ENCODE measurements at regions of chr5 and their contacts with region 1.

Region 1: DNA sequence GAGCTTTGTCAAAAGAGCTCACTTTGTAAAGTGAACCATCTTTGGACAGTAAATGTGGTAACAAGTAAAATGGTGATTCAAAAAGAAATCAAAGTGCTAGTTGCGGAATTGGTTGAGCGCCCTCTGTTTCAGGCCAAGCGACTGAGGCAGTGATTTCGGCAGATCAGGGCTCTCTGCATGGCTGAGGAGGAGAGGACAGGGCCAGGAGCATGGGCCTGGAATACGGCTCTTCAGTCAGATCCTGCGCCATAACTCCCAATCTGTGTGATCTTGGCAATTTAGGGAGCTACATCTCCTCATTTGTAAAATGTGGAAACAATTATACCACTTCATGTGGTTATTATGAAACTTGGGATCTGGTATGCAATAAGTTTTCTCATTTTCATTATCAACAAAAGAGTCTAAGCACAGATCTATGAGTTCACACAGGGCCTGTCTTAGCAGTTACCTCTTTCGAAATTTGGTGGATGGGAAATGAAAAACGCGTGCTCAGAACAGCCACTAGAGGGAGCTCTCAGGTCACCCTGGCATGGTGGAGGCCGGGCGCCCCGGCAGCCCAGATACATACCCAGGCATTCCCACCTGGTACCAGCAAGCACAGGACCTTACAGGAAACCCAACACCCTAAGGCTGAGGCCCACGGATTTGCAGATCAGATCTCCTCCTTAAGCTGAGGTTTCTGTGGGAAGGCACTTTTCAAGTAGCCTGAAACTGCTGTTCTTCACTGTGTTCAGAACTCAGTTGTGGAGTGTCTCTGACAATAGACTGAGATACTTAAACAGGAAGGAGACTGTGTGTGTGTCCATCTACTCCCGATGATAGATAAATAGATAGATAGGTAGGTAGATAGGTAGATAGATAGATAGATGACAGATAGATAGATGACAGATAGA is 303.7 kb downstream of the RAB3C start:
- DNase-seq: peak; percentile 71 to 81
- H3K4me3 ChIP-seq: no peak overlapping the region
- H3K4me3 Mint-ChIP-seq: no peak overlapping the region
- H3K27ac Mint-ChIP-seq: no peak overlapping the region
- H3K4me1 ChIP-seq: peaks cover 10% of the 10 kb centered on the region
- H3K4me1 Mint-ChIP-seq: peaks cover 17% of the 10 kb centered on the region
- H3K27me3 ChIP-seq: no peaks in the 10 kb centered on the region; the same call in 1 of the 2 replicates
- H3K27me3 Mint-ChIP-seq: peaks cover 3% of the 10 kb centered on the region
- CTCF ChIP-seq: peak; percentile 89 to 93

Region 2: DNA sequence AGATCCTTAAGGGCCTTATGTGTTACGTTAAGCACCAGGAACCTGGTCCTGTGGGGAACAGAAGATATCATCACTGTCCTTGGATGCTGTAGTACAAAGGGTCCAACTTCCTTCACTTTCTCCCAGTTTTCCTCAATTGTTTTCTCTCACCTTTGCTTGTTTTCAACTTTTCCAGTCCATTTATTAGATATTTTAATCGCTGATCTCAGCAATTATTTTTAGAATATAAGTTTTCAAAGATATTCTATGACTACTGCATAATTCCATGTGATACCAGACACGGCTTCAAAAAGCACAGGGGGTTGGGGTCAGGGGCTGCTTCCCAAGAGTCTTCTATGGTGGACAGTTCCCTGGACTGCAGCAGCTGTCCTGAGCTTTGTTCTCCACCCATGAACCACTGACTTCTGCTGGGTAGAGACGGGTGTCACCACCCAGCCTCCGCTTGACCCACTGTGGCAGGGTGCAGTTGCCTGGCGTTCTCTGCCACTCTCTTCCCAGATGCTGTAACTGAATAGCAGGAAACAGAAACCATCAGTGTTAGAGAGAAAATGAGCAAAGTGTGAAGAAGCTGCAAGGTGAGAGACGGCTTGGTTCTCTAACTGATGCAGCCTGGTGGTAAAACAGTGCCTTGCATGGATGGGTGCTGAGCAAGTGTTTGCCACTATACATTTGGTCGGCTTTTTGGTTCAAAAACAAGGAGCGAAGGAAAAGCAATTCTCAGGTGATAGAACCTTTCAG is 79.3 kb after region 1 on chr5:
- CTCF ChIA-PET with region 1: interaction called, 5 read pairs
- POLR2A ChIA-PET with region 1: no interaction called
- intact Hi-C with region 1: loop called (anchors 2 kb)
- DNase-seq: no peak
- H3K4me3 ChIP-seq: no peak overlapping the region
- H3K4me3 Mint-ChIP-seq: no peak overlapping the region
- H3K27ac Mint-ChIP-seq: no peak overlapping the region
- H3K4me1 ChIP-seq: no peaks in the 10 kb centered on the region
- H3K4me1 Mint-ChIP-seq: peaks cover 10% of the 10 kb centered on the region
- H3K27me3 ChIP-seq: no peaks in the 10 kb centered on the region
- H3K27me3 Mint-ChIP-seq: no peaks in the 10 kb centered on the region
- CTCF ChIP-seq: peak; percentile 13 to 17

Region 3: DNA sequence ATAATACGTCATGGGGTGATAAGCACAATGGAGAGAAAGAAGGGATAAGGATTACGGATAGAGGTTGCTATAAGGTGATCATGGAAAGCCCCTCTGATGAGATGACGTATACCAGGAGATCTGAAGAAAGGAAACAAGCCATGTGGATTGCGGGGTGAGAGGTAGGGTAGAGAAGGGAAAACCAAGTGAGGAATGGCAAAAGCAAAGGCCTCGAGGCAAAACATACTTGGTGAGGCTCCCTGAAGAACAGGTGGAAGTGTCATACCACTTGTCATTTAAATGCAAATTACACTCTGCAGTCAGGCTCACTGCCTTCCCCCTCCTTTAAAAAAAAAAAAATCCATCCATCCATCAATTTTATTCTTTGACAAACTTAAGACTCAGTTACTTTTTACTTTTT is 117.1 kb after region 1 on chr5:
- CTCF ChIA-PET with region 1: no interaction called
- POLR2A ChIA-PET with region 1: no interaction called
- intact Hi-C with region 1: loop called (anchors 1 kb)
- DNase-seq: no peak
- H3K4me3 ChIP-seq: no peak overlapping the region
- H3K4me3 Mint-ChIP-seq: no peak overlapping the region
- H3K27ac Mint-ChIP-seq: no peak overlapping the region
- H3K4me1 ChIP-seq: 0 out of 2 replicates have a peak, but pooled peaks cover 14% of the 10 kb centered on the region
- H3K4me1 Mint-ChIP-seq: peaks cover 26% of the 10 kb centered on the region
- H3K27me3 ChIP-seq: no peaks in the 10 kb centered on the region
- H3K27me3 Mint-ChIP-seq: no peaks in the 10 kb centered on the region
- CTCF ChIP-seq: no peak

Region 4: DNA sequence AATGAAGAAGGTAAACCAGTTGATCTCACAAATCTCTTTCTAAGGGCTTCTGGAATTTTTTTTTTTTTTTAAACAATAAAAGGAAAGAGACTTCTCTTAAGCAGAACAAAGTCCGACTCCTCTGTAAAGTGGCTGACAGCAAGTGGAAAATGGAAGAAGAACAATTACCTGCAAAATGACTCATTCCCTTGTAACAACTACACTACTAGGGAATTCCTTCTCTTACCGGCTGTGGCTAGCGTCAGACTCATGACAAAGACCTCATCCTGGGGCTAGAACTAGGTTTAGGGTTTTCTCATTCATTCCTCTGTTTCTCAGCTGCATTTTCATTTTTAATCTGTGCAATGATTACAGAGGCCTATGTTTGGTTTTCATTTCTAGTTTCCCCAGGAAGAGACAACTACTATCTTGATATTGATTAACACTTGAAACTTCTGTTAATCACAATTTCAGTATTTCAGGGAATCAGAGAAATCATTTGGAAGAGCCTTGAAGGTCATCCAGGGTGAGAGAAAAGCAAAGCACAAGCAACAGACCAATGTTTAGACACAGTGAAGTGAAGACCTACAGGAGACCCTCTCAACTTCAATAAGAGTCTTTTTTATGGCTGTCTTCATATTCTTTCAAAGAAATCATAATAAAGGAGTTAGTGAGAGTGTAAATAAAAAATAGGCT is 134.2 kb after region 1 on chr5:
- CTCF ChIA-PET with region 1: no interaction called
- POLR2A ChIA-PET with region 1: no interaction called
- intact Hi-C with region 1: loop called (anchors 5 kb)
- DNase-seq: peak in 1 of 2 experiments; percentile 37
- H3K4me3 ChIP-seq: no peak overlapping the region
- H3K4me3 Mint-ChIP-seq: peak overlapping the region; percentile 54
- H3K27ac Mint-ChIP-seq: peak overlapping the region; percentile 49
- H3K4me1 ChIP-seq: peaks cover 32% of the 10 kb centered on the region
- H3K4me1 Mint-ChIP-seq: peaks cover 46% of the 10 kb centered on the region
- H3K27me3 ChIP-seq: no peaks in the 10 kb centered on the region
- H3K27me3 Mint-ChIP-seq: no peaks in the 10 kb centered on the region
- CTCF ChIP-seq: no peak

Region 5: GRCh38 chr5:59367791-59368394 is 481.3 kb after region 1 on chr5:
- CTCF ChIA-PET with region 1: interaction called, 3 read pairs
- POLR2A ChIA-PET with region 1: interaction called, 6 read pairs
- intact Hi-C with region 1: loop called (anchors 5 kb)
- DNase-seq: peak; percentile 63
- H3K4me3 ChIP-seq: no peak overlapping the region
- H3K4me3 Mint-ChIP-seq: no peak overlapping the region
- H3K27ac Mint-ChIP-seq: no peak overlapping the region
- H3K4me1 ChIP-seq: no peaks in the 10 kb centered on the region
- H3K4me1 Mint-ChIP-seq: no peaks in the 10 kb centered on the region
- H3K27me3 ChIP-seq: no peaks in the 10 kb centered on the region
- H3K27me3 Mint-ChIP-seq: no peaks in the 10 kb centered on the region
- CTCF ChIP-seq: peak; percentile 67 to 87

Region 6: GRCh38 chr5:59380350-59380951 is 493.9 kb after region 1 on chr5:
- CTCF ChIA-PET with region 1: no interaction called
- POLR2A ChIA-PET with region 1: no interaction called
- intact Hi-C with region 1: loop called (anchors 5 kb)
- DNase-seq: peak in 1 of 2 experiments; percentile 50
- H3K4me3 ChIP-seq: no peak overlapping the region
- H3K4me3 Mint-ChIP-seq: no peak overlapping the region
- H3K27ac Mint-ChIP-seq: no peak overlapping the region
- H3K4me1 ChIP-seq: peaks cover 7% of the 10 kb centered on the region; the same call in 1 of the 2 replicates
- H3K4me1 Mint-ChIP-seq: peaks cover under 1% of the 10 kb centered on the region
- H3K27me3 ChIP-seq: no peaks in the 10 kb centered on the region
- H3K27me3 Mint-ChIP-seq: no peaks in the 10 kb centered on the region
- CTCF ChIP-seq: peak; percentile 50 to 56